ENCODE measurements at regions of chr1 and their contacts with region 1.

Region 1: DNA sequence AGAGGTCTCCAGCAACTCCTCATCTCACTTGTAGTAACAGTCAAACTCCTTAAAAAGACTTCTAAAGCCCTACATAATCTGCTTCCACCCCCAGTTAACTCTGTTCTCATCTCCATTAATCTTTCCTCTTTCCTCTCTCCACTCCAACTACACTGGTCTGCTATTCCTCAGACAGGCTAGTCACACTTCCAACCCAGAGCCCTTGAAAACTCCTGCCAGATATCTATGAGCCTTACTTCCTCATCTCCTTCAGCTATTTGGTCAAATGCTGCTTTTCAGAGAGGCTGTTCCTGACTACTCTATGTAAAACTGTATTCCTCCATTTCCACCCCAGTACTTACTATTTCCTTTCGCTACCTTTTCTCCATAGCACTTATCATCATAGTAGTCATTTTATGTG is 24.4 kb downstream of the PCP4L1 start:
- DNase-seq: no peak
- ATAC-seq: no peak
- H3K4me3 ChIP-seq: no peak overlapping the region
- H3K4me3 Mint-ChIP-seq: no peak overlapping the region
- H3K27ac ChIP-seq: no peak overlapping the region
- H3K27ac Mint-ChIP-seq: no peak overlapping the region
- H3K4me1 ChIP-seq: no peaks in the 10 kb centered on the region
- H3K4me1 Mint-ChIP-seq: no peaks in the 10 kb centered on the region
- H3K27me3 ChIP-seq: no peaks in the 10 kb centered on the region
- H3K27me3 Mint-ChIP-seq: no peaks in the 10 kb centered on the region
- CTCF ChIP-seq: no peak

Region 2: GRCh38 chr1:161244888-161245287 is 38.1 kb before region 1 on chr1:
- CTCF ChIA-PET with region 1: no interaction called
- POLR2A ChIA-PET with region 1: no interaction called
- intact Hi-C with region 1: loop called in 1 of 2 experiments (anchors 5 kb)
- DNase-seq: no peak
- ATAC-seq: no peak
- H3K4me3 ChIP-seq: no peak overlapping the region
- H3K4me3 Mint-ChIP-seq: no peak overlapping the region
- H3K27ac ChIP-seq: no peak overlapping the region
- H3K27ac Mint-ChIP-seq: no peak overlapping the region
- H3K4me1 ChIP-seq: no peaks in the 10 kb centered on the region
- H3K4me1 Mint-ChIP-seq: no peaks in the 10 kb centered on the region
- H3K27me3 ChIP-seq: no peaks in the 10 kb centered on the region
- H3K27me3 Mint-ChIP-seq: peaks cover 9% of the 10 kb centered on the region
- CTCF ChIP-seq: no peak

Region 3: GRCh38 chr1:162213281-162213912 is 930.4 kb after region 1 on chr1:
- CTCF ChIA-PET with region 1: no interaction called
- POLR2A ChIA-PET with region 1: no interaction called
- intact Hi-C with region 1: no loop called
- DNase-seq: no peak
- ATAC-seq: no peak
- H3K4me3 ChIP-seq: no peak overlapping the region
- H3K4me3 Mint-ChIP-seq: no peak overlapping the region
- H3K27ac ChIP-seq: no peak overlapping the region
- H3K27ac Mint-ChIP-seq: no peak overlapping the region
- H3K4me1 ChIP-seq: no peaks in the 10 kb centered on the region
- H3K4me1 Mint-ChIP-seq: no peaks in the 10 kb centered on the region
- H3K27me3 ChIP-seq: peaks cover 0 to 5% of the 10 kb centered on the region in 2 experiments
- H3K27me3 Mint-ChIP-seq: peaks cover 59% of the 10 kb centered on the region
- CTCF ChIP-seq: no peak